Heart right ventricle (tissue), 16 donors: ENCODE measurements at regions of chr16 and their contacts with region 1.

Region 1: GRCh38 chr16:19717771-19718602 is at the starts of genes IQCK and KNOP1:
- DNase-seq: peak; percentile 90 to 91
- ATAC-seq: peak; percentile 95 to 98 (median 98)
- H3K4me3 ChIP-seq: peak within 1 kb of the TSS; percentile 75 to 99 (median 95)
- H3K27ac ChIP-seq: peak within 1 kb of the TSS in 9 of 10 donors; percentile 51 to 94 (median 85)
- H3K4me1 ChIP-seq: peaks cover 0 to 53% (median 41%) of the 10 kb centered on the region in 9 donors
- H3K27me3 ChIP-seq: no peaks in the 10 kb centered on the region
- CTCF ChIP-seq: peak in 2 of 9 donors; percentile 10 to 18
- total RNA-seq, gene IQCK: 5.5 to 11.7 (median 7.4) TPM
- total RNA-seq, gene KNOP1: 4.5 to 10.2 (median 6.5) TPM

Region 2: DNA sequence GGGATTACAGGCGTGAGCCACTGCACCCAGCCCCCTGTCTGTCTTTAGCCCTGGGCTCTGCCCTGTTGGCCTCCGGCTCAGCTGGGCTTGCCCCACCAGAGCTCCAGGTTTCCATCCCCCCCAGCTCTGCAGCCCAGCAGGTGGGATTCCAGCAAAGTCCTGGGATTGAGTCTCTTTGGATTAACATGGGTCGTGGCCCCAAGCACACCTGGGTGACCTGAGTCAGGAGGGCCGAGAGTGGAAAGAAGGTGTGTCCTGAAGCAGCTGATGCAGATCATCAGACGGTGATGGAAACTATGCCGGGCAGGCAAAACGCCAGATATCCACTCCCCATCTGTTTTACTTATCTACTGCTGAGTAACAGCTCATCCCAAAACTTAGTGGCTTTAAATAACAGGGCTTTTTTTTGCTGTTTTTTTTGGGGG is 72.4 kb before region 1 on chr16:
- intact Hi-C with region 1: loop called in 3 of 10 experiments (anchors 5 to 10 kb)
- DNase-seq: peak; percentile 71 to 77
- ATAC-seq: peak; percentile 74 to 91 (median 82)
- H3K4me3 ChIP-seq: peak overlapping the region in 9 of 10 donors; percentile 4 to 38 (median 31)
- H3K27ac ChIP-seq: peak overlapping the region; percentile 40 to 90 (median 77)
- H3K4me1 ChIP-seq: peaks cover 5 to 37% (median 14%) of the 10 kb centered on the region in 9 donors
- H3K27me3 ChIP-seq: no peaks in the 10 kb centered on the region
- CTCF ChIP-seq: no peak

Region 3: DNA sequence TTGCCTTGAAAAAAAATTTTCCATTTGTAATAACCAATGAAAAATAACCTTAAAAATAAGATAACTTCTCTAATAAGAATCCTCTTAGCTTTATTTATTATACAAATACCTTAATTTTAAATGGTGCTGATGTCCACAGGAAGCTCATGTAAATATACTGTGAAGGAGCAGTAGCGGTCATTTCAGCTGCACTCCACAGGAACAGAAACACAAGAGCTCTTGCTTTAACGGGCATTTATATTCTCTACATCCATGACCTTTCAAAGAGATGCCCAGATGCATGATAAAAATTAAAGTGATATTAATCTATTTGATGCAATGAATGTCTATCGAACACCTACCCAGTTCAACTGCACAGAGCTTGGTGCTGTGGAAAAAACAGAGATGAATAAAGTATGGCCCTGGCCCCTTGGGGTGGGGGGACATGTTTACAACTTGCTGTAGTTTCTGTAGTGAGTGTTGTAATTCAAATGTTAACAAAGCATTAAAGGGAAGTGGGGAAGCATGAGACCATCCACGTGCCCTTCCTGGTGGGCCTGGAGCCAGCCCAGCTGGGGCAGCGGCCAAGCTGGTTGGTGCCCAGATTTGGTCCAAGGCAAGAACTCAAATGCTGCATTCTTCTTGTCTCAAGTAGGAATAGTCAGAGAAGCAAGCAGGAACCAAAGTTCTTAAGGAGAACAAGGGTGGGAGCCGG is 48.0 kb after region 1 on chr16:
- intact Hi-C with region 1: loop called in 1 of 10 experiments (anchors 5 kb)
- DNase-seq: peak; percentile 59 to 67
- ATAC-seq: peak; percentile 38 to 79 (median 76)
- H3K4me3 ChIP-seq: peak overlapping the region in 2 of 10 donors; percentile 3 to 6
- H3K27ac ChIP-seq: peak overlapping the region in 5 of 10 donors; percentile 43 to 67 (median 47)
- H3K4me1 ChIP-seq: peaks cover 0 to 48% (median 15%) of the 10 kb centered on the region in 9 donors
- H3K27me3 ChIP-seq: no peaks in the 10 kb centered on the region
- CTCF ChIP-seq: no peak

Region 4: DNA sequence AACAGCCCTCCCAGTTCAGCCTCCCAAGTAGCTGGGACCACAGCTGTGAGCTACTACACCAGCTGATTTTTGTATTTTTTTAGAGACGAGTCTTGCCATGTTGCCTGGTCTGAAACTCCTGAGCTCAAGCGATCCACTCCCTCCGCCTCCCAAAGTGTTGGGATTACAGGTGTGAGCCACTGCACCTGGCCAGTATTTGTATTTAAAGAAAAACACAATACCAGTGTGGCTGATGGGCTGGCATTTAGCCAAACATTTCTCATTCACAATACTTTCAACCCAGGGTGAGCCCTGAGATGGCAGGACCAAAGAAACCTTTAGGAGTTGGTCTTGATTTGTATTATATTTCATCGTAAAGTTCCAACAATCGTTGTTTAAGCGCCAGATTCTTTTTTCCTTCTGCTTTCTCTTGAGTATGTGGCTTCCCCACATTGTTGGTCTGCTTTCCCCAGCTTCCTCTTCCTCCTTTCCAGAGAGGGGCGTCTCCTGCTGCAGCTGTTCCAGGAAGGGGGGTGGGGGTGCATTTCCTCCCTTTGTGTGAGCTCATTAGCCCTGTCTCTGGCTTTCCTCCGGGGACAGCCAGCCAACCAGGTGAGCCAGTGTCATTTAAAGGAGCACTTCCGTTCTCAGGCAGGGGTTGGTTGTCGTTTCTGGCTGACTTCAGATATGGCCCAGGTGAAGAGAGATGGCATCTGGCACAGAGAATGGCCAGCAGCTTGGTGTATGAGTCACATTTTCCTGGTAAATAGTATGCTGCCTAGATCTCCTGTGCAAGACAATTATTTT is 86.7 kb after region 1 on chr16:
- intact Hi-C with region 1: loop called in 1 of 10 experiments (anchors 5 kb)
- DNase-seq: peak; percentile 66 to 90
- ATAC-seq: peak; percentile 79 to 89 (median 87)
- H3K4me3 ChIP-seq: no peak overlapping the region
- H3K27ac ChIP-seq: peak overlapping the region; percentile 51 to 85 (median 72)
- H3K4me1 ChIP-seq: peaks cover 6 to 58% (median 37%) of the 10 kb centered on the region in 9 donors
- H3K27me3 ChIP-seq: no peaks in the 10 kb centered on the region
- CTCF ChIP-seq: no peak

Region 5: GRCh38 chr16:19879241-19879792 is 161.3 kb after region 1 on chr16:
- intact Hi-C with region 1: loop called in 8 of 10 experiments (anchors 2 to 10 kb)
- DNase-seq: peak in 1 of 2 donors; percentile 57
- ATAC-seq: peak in 3 of 8 donors; percentile 23 to 54 (median 46)
- H3K4me3 ChIP-seq: no peak overlapping the region
- H3K27ac ChIP-seq: peak overlapping the region in 8 of 10 donors; percentile 22 to 97 (median 64)
- H3K4me1 ChIP-seq: peaks cover 14 to 87% (median 78%) of the 10 kb centered on the region in 9 donors
- H3K27me3 ChIP-seq: peaks cover 0 to 25% (median 0%) of the 10 kb centered on the region in 7 donors
- CTCF ChIP-seq: peak in 1 of 9 donors; percentile 11